ENCODE measurements at regions of chr15 and their contacts with region 1.

Region 1: DNA sequence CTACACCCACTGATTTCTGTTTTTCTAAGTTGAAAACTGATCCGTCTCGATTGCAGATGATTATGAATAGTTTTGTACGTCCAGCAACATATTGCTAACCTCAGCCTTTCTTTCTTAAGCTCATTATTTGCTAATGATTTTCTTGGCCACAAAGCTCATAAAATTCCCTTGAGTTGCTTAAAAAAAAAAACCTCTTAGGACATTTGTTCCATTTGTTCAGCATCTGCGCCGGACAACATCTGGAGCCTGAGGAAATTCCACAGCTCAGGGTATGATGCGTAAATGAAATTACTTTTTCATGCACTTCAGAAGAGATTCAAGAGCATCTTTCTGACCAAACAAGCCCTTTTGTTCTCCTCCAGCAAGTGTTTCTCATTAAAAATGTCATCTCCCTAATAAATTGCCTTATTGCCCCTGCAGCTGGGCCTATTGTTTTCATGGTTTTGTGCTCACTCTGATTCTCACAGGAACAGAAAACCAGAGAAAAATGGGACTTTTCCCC is 249.1 kb upstream of the MCTP2 start:
- DNase-seq: no peak
- H3K4me3 ChIP-seq: no peak overlapping the region
- H3K27ac ChIP-seq: peak overlapping the region; percentile 47
- H3K4me1 ChIP-seq: peaks cover 26% of the 10 kb centered on the region
- H3K27me3 ChIP-seq: no peaks in the 10 kb centered on the region
- CTCF ChIP-seq: no peak
- POLR2A ChIP-seq: no peak

Region 2: GRCh38 chr15:92683232-92683834 is 1298.9 kb before region 1 on chr15:
- intact Hi-C with region 1: no loop called
- DNase-seq: peak in 1 of 2 donors; percentile 89
- H3K4me3 ChIP-seq: no peak overlapping the region
- H3K27ac ChIP-seq: peak overlapping the region; percentile 40
- H3K4me1 ChIP-seq: peaks cover 15% of the 10 kb centered on the region
- H3K27me3 ChIP-seq: no peaks in the 10 kb centered on the region
- CTCF ChIP-seq: peak in 1 of 3 experiments; percentile 46
- POLR2A ChIP-seq: no peak

Region 3: DNA sequence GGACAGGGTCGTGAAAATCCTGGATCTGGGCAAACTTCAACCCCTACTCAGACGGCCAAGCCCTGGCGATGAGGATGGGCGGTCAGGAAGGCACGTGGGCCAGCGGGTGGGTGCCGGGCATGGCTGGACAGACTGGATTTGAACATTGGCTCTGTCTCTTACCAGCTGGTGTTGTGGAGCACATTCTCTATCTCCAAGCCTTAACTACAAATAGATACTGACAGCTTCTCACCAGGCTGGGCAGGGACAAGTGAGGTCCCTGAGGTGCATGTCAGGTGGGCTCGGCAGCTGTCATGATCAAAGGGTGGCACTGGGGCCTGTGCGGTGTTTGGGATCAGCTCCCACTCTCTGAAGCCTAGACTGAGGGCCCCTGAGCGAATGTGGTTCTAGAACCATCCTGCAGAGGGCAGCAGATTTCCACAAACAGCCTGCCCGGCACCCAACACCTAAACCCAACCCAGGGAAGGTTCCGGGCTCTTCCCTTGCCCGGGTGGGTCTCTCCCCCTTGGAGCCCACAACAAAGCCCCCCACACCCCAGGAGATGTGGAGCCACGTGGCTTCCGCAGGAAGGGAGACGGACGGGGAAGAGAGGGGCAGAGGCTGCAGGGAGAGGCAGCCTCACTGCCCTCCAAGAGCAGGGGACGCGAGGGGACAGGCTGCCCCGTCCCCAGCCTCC is 951.7 kb before region 1 on chr15:
- intact Hi-C with region 1: loop called (anchors 10 kb)
- DNase-seq: peak in 1 of 2 donors; percentile 88
- H3K4me3 ChIP-seq: no peak overlapping the region
- H3K27ac ChIP-seq: peak overlapping the region; percentile 79
- H3K4me1 ChIP-seq: peaks cover 49% of the 10 kb centered on the region
- H3K27me3 ChIP-seq: no peaks in the 10 kb centered on the region
- CTCF ChIP-seq: peak; percentile 65 to 90 (median 76)
- POLR2A ChIP-seq: no peak

Region 4: GRCh38 chr15:93562395-93563123 is 419.7 kb before region 1 on chr15:
- intact Hi-C with region 1: loop called (anchors 5 kb)
- DNase-seq: no peak
- H3K4me3 ChIP-seq: no peak overlapping the region
- H3K27ac ChIP-seq: no peak overlapping the region
- H3K4me1 ChIP-seq: peaks cover 10% of the 10 kb centered on the region
- H3K27me3 ChIP-seq: no peaks in the 10 kb centered on the region
- CTCF ChIP-seq: no peak
- POLR2A ChIP-seq: no peak

Region 5: GRCh38 chr15:94086341-94086740 is 104.1 kb after region 1 on chr15:
- intact Hi-C with region 1: no loop called
- DNase-seq: no peak
- H3K4me3 ChIP-seq: no peak overlapping the region
- H3K27ac ChIP-seq: no peak overlapping the region
- H3K4me1 ChIP-seq: peaks cover 18% of the 10 kb centered on the region
- H3K27me3 ChIP-seq: no peaks in the 10 kb centered on the region
- CTCF ChIP-seq: no peak
- POLR2A ChIP-seq: no peak

Region 6: GRCh38 chr15:94417501-94418293 is 435.4 kb after region 1 on chr15:
- intact Hi-C with region 1: no loop called
- DNase-seq: no peak
- H3K4me3 ChIP-seq: no peak overlapping the region
- H3K27ac ChIP-seq: no peak overlapping the region
- H3K4me1 ChIP-seq: peaks cover 6% of the 10 kb centered on the region
- H3K27me3 ChIP-seq: no peaks in the 10 kb centered on the region
- CTCF ChIP-seq: no peak
- POLR2A ChIP-seq: no peak